Activated CD4-positive, alpha-beta T cell treated with anti-CD3 and anti-CD28 coated beads for 36 hours (primary cell): ENCODE measurements at regions of chr5 and their contacts with region 1.

Region 1: GRCh38 chr5:135565725-135566421 is 12.9 kb downstream of the CXCL14 start:
- DNase-seq: peak; percentile 85
- ATAC-seq: peak; percentile 72
- H3K4me3 Mint-ChIP-seq: no peak overlapping the region
- H3K27ac Mint-ChIP-seq: no peak overlapping the region
- H3K4me1 Mint-ChIP-seq: peaks cover 2% of the 10 kb centered on the region
- H3K27me3 Mint-ChIP-seq: peaks cover 5% of the 10 kb centered on the region

Region 2: GRCh38 chr5:135508482-135509005 is 57.3 kb before region 1 on chr5:
- CTCF ChIA-PET with region 1: interaction called, 10 read pairs
- POLR2A ChIA-PET with region 1: no interaction called
- intact Hi-C with region 1: no loop called
- DNase-seq: no peak
- ATAC-seq: peak; percentile 30
- H3K4me3 Mint-ChIP-seq: no peak overlapping the region
- H3K27ac Mint-ChIP-seq: no peak overlapping the region
- H3K4me1 Mint-ChIP-seq: peaks cover 3% of the 10 kb centered on the region
- H3K27me3 Mint-ChIP-seq: peaks cover 42% of the 10 kb centered on the region

Region 3: DNA sequence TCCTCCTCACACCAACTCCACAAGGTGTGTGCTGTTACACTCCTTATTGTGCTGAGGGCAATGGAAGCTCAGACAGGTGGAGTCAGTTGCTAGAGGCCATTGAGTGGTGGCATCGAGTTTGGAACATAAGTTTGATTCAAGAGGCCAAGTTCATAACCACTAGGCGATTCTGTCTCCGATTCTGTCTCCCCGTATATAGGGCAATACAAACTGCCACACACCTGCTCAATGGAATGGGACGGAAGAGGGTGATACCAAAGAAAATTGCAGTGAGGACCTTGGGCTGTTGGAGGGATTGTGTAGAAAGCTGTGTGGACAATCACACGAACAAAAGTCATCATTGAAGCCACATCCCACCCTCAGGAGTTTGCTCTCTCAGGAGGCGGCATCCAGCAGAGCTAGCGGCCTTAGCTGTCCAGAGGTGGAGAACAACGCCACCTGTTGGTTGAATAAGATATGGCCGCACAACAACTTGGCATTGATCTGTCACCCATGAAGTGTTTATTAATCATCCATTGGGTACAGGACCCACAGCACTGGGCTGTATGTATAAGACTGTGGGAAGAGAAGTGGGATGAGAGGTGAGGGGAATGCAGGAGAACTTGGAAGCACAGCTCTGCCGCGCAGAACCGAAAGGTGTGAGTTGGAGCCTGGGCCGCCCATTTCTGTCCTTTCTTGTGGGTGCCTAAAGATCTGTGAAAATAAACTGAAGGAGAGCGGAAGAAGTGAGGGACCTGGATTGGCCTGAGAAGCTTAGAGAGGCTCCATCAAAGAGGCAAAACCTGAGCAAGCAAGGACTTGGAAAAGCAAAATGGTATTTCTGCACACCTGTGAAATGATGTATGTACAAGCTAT is 14.1 kb before region 1 on chr5:
- CTCF ChIA-PET with region 1: interaction called, 87 read pairs
- POLR2A ChIA-PET with region 1: no interaction called
- intact Hi-C with region 1: no loop called
- DNase-seq: peak; percentile 80
- ATAC-seq: peak; percentile 77
- H3K4me3 Mint-ChIP-seq: no peak overlapping the region
- H3K27ac Mint-ChIP-seq: no peak overlapping the region
- H3K4me1 Mint-ChIP-seq: no peaks in the 10 kb centered on the region
- H3K27me3 Mint-ChIP-seq: peaks cover 43% of the 10 kb centered on the region

Region 4: GRCh38 chr5:135578685-135579341 is 12.9 kb after region 1 on chr5 and contains the start of gene CXCL14:
- CTCF ChIA-PET with region 1: interaction called, 11 read pairs
- POLR2A ChIA-PET with region 1: no interaction called
- intact Hi-C with region 1: no loop called
- DNase-seq: peak; percentile 55
- ATAC-seq: peak; percentile 68
- H3K4me3 Mint-ChIP-seq: no peak within 1 kb of the TSS
- H3K27ac Mint-ChIP-seq: no peak within 1 kb of the TSS
- H3K4me1 Mint-ChIP-seq: peaks cover 2% of the 10 kb centered on the region
- H3K27me3 Mint-ChIP-seq: peaks cover 55% of the 10 kb centered on the region
- total RNA-seq, gene CXCL14: not detected

Region 5: DNA sequence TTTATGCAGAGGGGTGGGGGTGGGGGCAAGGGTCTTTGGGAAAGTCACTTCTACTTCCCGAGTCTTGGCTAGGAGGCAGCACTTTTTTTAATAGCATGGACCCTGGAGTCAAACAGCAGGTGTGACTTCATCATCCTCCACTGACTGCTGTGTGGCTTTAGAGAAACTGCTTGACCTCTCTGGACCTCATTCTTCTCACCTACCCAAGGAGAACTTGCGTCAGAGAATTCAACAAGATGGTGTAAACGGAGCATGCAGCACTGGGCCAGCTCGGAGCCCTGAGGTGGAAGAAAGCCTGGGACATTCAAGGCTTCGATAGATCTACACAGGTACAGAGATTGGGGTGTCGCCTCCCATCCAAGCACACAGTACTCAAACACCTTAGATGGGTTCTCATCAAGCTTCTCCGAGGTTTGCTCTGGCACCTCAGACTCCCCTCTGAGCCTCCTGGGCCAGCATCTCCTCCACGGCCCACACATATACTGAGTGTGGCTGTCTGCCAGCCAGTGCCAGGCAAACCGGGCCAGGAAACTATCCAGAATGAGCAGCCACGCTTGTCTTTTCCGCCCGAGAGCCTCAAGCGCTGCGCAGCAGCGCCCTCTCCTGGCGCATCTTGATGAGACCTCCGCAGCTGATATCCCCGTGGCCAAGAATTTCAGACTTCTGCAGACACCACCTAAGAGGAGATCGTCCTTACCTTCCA is 264.0 kb after region 1 on chr5:
- CTCF ChIA-PET with region 1: interaction called, 27 read pairs
- POLR2A ChIA-PET with region 1: no interaction called
- intact Hi-C with region 1: loop called in 1 of 2 experiments (anchors 1 kb)
- DNase-seq: peak; percentile 77
- ATAC-seq: peak; percentile 57
- H3K4me3 Mint-ChIP-seq: no peak overlapping the region
- H3K27ac Mint-ChIP-seq: no peak overlapping the region
- H3K4me1 Mint-ChIP-seq: peaks cover 3% of the 10 kb centered on the region
- H3K27me3 Mint-ChIP-seq: peaks cover 44% of the 10 kb centered on the region